Heart left ventricle (tissue), 16 donors: ENCODE measurements at regions of chr7 and their contacts with region 1.

Region 1: DNA sequence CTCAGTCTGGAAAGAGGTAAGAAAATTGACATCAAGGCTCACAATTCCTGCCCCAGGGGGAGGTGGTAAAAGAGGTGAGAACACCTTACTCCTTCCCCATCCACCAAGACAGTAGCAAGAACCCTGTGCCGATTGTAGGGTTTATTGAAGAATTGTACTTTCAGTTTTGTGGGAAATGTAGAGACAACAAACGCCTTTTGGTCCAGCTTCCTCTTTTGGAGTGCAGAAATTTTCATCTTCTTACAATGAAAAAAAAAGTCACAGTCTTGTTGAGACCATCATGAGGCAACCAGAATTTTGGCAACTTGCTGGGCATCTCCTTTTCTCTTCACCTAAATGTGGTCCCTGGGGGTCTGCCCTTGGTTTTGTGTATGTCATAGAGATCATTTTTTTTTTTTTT is 217.7 kb downstream of the TMEM178B start:
- DNase-seq: no peak
- ATAC-seq: no peak
- H3K4me3 ChIP-seq: no peak overlapping the region
- H3K27ac ChIP-seq: peak overlapping the region in 3 of 12 donors; percentile 3 to 19 (median 16)
- H3K4me1 ChIP-seq: peaks cover 0 to 44% (median 4%) of the 10 kb centered on the region in 12 donors
- H3K27me3 ChIP-seq: no peaks in the 10 kb centered on the region
- CTCF ChIP-seq: no peak
- POLR2A ChIP-seq: no peak

Region 2: GRCh38 chr7:140506788-140507464 is 784.6 kb before region 1 on chr7:
- intact Hi-C with region 1: loop called in 1 of 10 experiments (anchors 10 kb)
- DNase-seq: peak in 4 of 5 donors; percentile 71 to 84 (median 81)
- ATAC-seq: peak; percentile 96 to 98 (median 97)
- H3K4me3 ChIP-seq: no peak overlapping the region
- H3K27ac ChIP-seq: peak overlapping the region; percentile 55 to 97 (median 86)
- H3K4me1 ChIP-seq: peaks cover 0 to 23% (median 10%) of the 10 kb centered on the region in 12 donors
- H3K27me3 ChIP-seq: no peaks in the 10 kb centered on the region
- CTCF ChIP-seq: peak in 5 of 12 donors; percentile 12 to 46 (median 33)
- POLR2A ChIP-seq: no peak

Region 3: GRCh38 chr7:140989068-140989467 is 302.5 kb before region 1 on chr7:
- intact Hi-C with region 1: no loop called
- DNase-seq: no peak
- ATAC-seq: no peak
- H3K4me3 ChIP-seq: no peak overlapping the region
- H3K27ac ChIP-seq: no peak overlapping the region
- H3K4me1 ChIP-seq: no peaks in the 10 kb centered on the region
- H3K27me3 ChIP-seq: no peaks in the 10 kb centered on the region
- CTCF ChIP-seq: no peak
- POLR2A ChIP-seq: no peak

Region 4: GRCh38 chr7:141167381-141167964 is 124.1 kb before region 1 on chr7:
- intact Hi-C with region 1: no loop called
- DNase-seq: no peak
- ATAC-seq: no peak
- H3K4me3 ChIP-seq: no peak overlapping the region
- H3K27ac ChIP-seq: no peak overlapping the region
- H3K4me1 ChIP-seq: no peaks in the 10 kb centered on the region
- H3K27me3 ChIP-seq: no peaks in the 10 kb centered on the region
- CTCF ChIP-seq: no peak
- POLR2A ChIP-seq: no peak